Heart left ventricle (tissue), 16 donors: ENCODE measurements at regions of chr22 and their contacts with region 1.

Region 1: GRCh38 chr22:35840302-35840739 is 122.6 kb downstream of the APOL5 start:
- DNase-seq: peak; percentile 83 to 92 (median 85)
- ATAC-seq: peak; percentile 63 to 91 (median 84)
- H3K4me3 ChIP-seq: peak overlapping the region; percentile 5 to 63 (median 50)
- H3K27ac ChIP-seq: peak overlapping the region in 11 of 12 donors; percentile 44 to 85 (median 77)
- H3K4me1 ChIP-seq: peaks cover 5 to 78% (median 50%) of the 10 kb centered on the region in 12 donors
- H3K27me3 ChIP-seq: no peaks in the 10 kb centered on the region
- CTCF ChIP-seq: no peak
- POLR2A ChIP-seq: no peak

Region 2: GRCh38 chr22:35766654-35767580 is 73.4 kb before region 1 on chr22:
- intact Hi-C with region 1: loop called in 4 of 10 experiments (anchors 5 to 10 kb)
- DNase-seq: no peak
- ATAC-seq: peak in 3 of 4 donors; percentile 59 to 84 (median 62)
- H3K4me3 ChIP-seq: peak overlapping the region in 5 of 12 donors; percentile 8 to 16 (median 10)
- H3K27ac ChIP-seq: peak overlapping the region in 9 of 12 donors; percentile 2 to 40 (median 35)
- H3K4me1 ChIP-seq: peaks cover 0 to 21% (median 11%) of the 10 kb centered on the region in 12 donors
- H3K27me3 ChIP-seq: no peaks in the 10 kb centered on the region
- CTCF ChIP-seq: no peak
- POLR2A ChIP-seq: no peak

Region 3: GRCh38 chr22:35785181-35785923 is 55.0 kb before region 1 on chr22:
- intact Hi-C with region 1: loop called in 1 of 10 experiments (anchors 10 kb)
- DNase-seq: no peak
- ATAC-seq: peak in 2 of 4 donors; percentile 45 to 57
- H3K4me3 ChIP-seq: no peak overlapping the region
- H3K27ac ChIP-seq: peak overlapping the region in 1 of 12 donors; percentile 44
- H3K4me1 ChIP-seq: peaks cover 0 to 61% (median 23%) of the 10 kb centered on the region in 12 donors
- H3K27me3 ChIP-seq: no peaks in the 10 kb centered on the region
- CTCF ChIP-seq: no peak
- POLR2A ChIP-seq: no peak

Region 4: DNA sequence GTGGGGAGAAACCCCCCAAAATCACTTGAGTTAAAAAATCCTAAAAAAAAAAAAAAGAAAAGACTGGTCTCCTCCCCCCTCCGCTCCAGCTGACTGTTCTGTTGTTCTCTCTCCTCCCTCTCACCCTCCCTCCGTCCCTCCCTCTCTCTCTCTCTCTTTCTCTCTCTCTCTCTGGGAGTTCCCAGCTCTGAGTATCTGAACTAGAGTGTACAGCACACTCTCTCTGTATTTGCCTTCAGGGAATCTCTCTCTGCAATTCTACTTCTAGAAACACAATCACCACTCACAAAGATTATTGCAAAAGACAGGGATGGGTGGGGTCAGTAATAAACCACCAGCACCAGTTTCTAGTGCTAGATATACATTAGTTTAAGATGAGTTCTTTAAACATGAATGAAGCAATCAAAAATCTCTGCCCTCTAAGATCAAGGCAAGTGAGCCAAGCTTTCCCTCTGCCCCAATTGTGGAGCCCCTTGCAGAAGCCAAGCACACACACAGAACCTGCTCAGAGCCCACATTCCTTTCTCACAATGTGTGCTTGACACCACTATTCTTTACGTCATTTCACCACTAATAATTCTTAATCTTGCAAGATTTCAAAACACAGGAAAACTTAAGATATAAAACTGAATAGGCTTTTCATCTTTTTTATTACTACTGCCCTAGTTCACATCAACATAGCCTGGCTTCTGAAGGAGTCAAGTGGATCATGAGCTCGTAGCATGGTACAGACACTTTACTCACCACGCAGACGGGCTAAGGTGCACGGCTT is 54.8 kb after region 1 on chr22:
- intact Hi-C with region 1: loop called in 5 of 10 experiments (anchors 5 to 10 kb)
- DNase-seq: peak in 4 of 5 donors; percentile 48 to 70 (median 54)
- ATAC-seq: peak; percentile 93 to 95 (median 95)
- H3K4me3 ChIP-seq: peak overlapping the region in 11 of 12 donors; percentile 16 to 57 (median 50)
- H3K27ac ChIP-seq: peak overlapping the region; percentile 76 to 95 (median 86)
- H3K4me1 ChIP-seq: peaks cover 3 to 74% (median 40%) of the 10 kb centered on the region in 12 donors
- H3K27me3 ChIP-seq: no peaks in the 10 kb centered on the region
- CTCF ChIP-seq: no peak
- POLR2A ChIP-seq: no peak